ENCODE measurements at regions of chr15 and their contacts with region 1.

Region 1: GRCh38 chr15:91055548-91056331 is 33.3 kb upstream of the VPS33B start:
- DNase-seq: no peak
- H3K4me3 ChIP-seq: no peak overlapping the region
- CTCF ChIP-seq: peak; percentile 80

Region 2: DNA sequence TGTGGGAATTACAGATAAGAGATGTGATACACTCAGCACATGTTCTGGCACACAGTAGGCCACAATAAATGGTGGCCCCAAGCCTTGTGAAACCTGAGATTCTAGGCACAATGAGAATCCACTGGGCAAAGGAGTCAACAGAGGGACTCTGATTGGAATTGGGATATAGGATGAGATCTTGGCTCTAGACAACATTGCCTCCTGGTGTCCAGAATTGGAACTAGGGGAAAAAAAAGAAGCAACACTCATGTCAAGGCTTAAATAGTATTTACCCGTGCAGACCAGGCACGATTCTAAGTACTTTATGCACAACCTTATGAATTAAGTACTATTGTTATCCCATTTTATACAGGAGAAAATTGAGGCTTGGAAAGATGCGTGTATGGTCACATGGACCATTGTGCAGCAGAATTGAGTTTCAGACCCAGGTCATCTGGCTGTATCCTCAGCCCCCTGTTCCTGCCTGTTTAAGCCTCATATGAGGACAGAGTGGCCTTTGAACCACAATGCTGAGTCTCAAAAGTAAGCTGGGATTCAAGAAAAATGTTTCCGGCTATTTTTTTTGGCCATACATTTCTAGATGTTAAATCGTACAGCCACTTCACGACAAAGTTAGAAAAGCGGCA is 169.1 kb after region 1 on chr15:
- CTCF ChIA-PET with region 1: interaction called, 32 read pairs
- POLR2A ChIA-PET with region 1: no interaction called
- DNase-seq: peak; percentile 1
- H3K4me3 ChIP-seq: no peak overlapping the region
- CTCF ChIP-seq: peak; percentile 41

Region 3: DNA sequence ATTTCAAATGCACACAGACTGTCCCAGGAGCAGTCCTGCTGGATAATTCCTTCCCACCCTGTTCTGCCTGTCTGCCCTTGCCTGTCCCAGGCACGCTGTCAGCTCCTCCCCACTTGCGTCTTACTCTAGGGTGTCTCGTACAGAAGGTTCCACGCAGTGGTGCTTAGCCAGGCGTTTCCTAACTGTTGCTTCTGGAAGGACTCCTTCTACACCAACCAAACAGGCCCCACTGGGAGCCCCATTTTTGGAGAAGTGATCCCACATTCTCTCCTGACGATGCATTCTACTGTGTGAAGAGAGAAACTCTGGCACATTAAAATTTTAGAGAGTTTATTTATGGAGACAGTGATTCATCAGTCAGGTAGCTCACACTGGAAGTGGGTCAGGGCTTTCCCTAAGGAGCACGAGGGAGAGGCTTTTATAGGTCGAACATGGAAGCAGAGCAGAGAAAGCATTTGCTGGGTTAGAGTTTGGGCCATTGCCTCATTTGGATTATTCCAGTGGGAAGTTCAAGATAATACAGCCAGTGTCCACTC is 208.3 kb after region 1 on chr15:
- CTCF ChIA-PET with region 1: interaction called, 32 read pairs
- POLR2A ChIA-PET with region 1: no interaction called
- DNase-seq: no peak
- H3K4me3 ChIP-seq: no peak overlapping the region
- CTCF ChIP-seq: no peak

Measured in AG04449 (cell line).